Sigmoid colon (tissue), 7 donors: ENCODE measurements at regions of chr20 and their contacts with region 1.

Region 1: DNA sequence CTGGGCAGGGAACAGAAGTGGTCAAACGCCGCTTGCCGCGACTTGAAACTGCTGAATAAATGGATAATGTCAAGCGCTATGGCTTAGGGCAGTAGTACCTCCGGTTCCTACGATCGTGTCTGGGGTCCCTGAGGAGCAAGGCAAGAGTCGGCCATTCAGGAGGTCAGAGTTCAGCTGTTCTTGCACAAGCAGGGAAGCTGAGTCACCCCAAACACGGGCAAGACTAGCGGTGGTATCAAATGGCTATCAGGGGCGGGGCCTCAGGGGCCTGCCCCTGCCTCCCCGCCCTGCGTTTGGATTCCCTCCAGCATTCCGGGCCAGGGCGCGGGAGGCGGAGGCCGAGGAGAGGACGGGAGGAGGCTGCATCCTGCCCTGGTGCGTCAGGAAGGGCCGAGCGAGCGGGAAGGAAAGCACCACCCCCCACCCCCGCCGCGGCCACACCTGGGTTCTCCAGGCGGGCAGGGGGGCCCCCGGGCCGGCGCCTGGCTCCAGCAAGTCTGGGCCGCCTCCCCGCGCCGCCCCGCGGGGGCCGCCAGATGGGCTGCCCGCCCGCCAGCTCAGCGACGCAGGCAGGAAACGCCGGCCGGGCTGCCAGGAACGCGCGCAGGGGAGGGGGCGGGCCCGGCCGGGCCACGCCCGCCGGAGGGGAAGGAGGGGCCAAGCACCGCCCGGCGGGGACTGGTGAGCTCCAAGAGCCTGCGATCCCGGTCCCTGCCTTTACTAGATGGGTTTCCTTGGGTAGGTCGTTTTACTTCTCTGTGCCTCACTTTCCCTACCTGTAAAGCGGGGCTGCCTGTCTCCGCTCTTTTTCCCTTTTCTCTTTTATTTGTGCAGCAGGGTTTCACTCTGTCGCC is 32.2 kb upstream of the ID1 start:
- DNase-seq: peak; percentile 98
- H3K4me3 ChIP-seq: peak overlapping the region; percentile 43 to 72 (median 58)
- H3K27ac ChIP-seq: peak overlapping the region; percentile 90 to 95 (median 92)
- H3K4me1 ChIP-seq: peaks cover 0 to 26% (median 16%) of the 10 kb centered on the region in 4 donors
- H3K27me3 ChIP-seq: no peaks in the 10 kb centered on the region
- CTCF ChIP-seq: no peak
- EP300 ChIP-seq: peak in 1 of 4 donors; percentile 65
- POLR2A ChIP-seq: peak; percentile 29 to 36

Region 2: GRCh38 chr20:31603822-31604567 is 31.1 kb after region 1 on chr20:
- intact Hi-C with region 1: loop called (anchors 1 kb)
- DNase-seq: peak; percentile 97
- H3K4me3 ChIP-seq: peak overlapping the region; percentile 50 to 69 (median 63)
- H3K27ac ChIP-seq: peak overlapping the region; percentile 77 to 91 (median 80)
- H3K4me1 ChIP-seq: peaks cover 0 to 38% (median 31%) of the 10 kb centered on the region in 4 donors
- H3K27me3 ChIP-seq: peaks cover 0 to 26% (median 0%) of the 10 kb centered on the region in 3 donors
- CTCF ChIP-seq: no peak
- EP300 ChIP-seq: peak in 2 of 4 donors; percentile 74 to 89
- POLR2A ChIP-seq: peak; percentile 26 to 82

Region 3: GRCh38 chr20:31723319-31724078 is 150.6 kb after region 1 on chr20:
- intact Hi-C with region 1: loop called (anchors 5 kb)
- DNase-seq: peak; percentile 99
- H3K4me3 ChIP-seq: peak overlapping the region; percentile 59 to 83 (median 78)
- H3K27ac ChIP-seq: peak overlapping the region; percentile 92 to 100 (median 98)
- H3K4me1 ChIP-seq: peaks cover 0 to 36% (median 36%) of the 10 kb centered on the region in 4 donors
- H3K27me3 ChIP-seq: no peaks in the 10 kb centered on the region
- CTCF ChIP-seq: peak; percentile 91 to 99 (median 94)
- EP300 ChIP-seq: no peak
- POLR2A ChIP-seq: peak; percentile 57 to 68

Region 4: GRCh38 chr20:31781945-31782344 is 209.0 kb after region 1 on chr20:
- intact Hi-C with region 1: no loop called
- DNase-seq: no peak
- H3K4me3 ChIP-seq: no peak overlapping the region
- H3K27ac ChIP-seq: no peak overlapping the region
- H3K4me1 ChIP-seq: no peaks in the 10 kb centered on the region
- H3K27me3 ChIP-seq: no peaks in the 10 kb centered on the region
- CTCF ChIP-seq: no peak
- EP300 ChIP-seq: no peak
- POLR2A ChIP-seq: no peak